Calu3 (cell line): ENCODE measurements at regions of chr11 and their contacts with region 1.

Region 1: GRCh38 chr11:5891216-5891800 is 1.7 kb upstream of the OR52E5 start:
- DNase-seq: no peak
- H3K4me3 Mint-ChIP-seq: no peak overlapping the region
- H3K27ac Mint-ChIP-seq: no peak overlapping the region
- H3K4me1 Mint-ChIP-seq: no peaks in the 10 kb centered on the region
- H3K27me3 Mint-ChIP-seq: peaks cover 31% of the 10 kb centered on the region
- CTCF ChIP-seq: no peak

Region 2: GRCh38 chr11:5123802-5124521 is 767.3 kb before region 1 on chr11:
- CTCF ChIA-PET with region 1: no interaction called
- intact Hi-C with region 1: loop called (anchors 5 kb)
- DNase-seq: peak; percentile 68
- H3K4me3 Mint-ChIP-seq: no peak overlapping the region
- H3K27ac Mint-ChIP-seq: no peak overlapping the region
- H3K4me1 Mint-ChIP-seq: no peaks in the 10 kb centered on the region
- H3K27me3 Mint-ChIP-seq: peaks cover 23% of the 10 kb centered on the region
- CTCF ChIP-seq: peak; percentile 54

Region 3: GRCh38 chr11:5204787-5205186 is 686.5 kb before region 1 on chr11:
- CTCF ChIA-PET with region 1: no interaction called
- intact Hi-C with region 1: loop called (anchors 10 kb)
- DNase-seq: peak; percentile 22
- H3K4me3 Mint-ChIP-seq: no peak overlapping the region
- H3K27ac Mint-ChIP-seq: no peak overlapping the region
- H3K4me1 Mint-ChIP-seq: no peaks in the 10 kb centered on the region
- H3K27me3 Mint-ChIP-seq: no peaks in the 10 kb centered on the region
- CTCF ChIP-seq: peak; percentile 53

Region 4: DNA sequence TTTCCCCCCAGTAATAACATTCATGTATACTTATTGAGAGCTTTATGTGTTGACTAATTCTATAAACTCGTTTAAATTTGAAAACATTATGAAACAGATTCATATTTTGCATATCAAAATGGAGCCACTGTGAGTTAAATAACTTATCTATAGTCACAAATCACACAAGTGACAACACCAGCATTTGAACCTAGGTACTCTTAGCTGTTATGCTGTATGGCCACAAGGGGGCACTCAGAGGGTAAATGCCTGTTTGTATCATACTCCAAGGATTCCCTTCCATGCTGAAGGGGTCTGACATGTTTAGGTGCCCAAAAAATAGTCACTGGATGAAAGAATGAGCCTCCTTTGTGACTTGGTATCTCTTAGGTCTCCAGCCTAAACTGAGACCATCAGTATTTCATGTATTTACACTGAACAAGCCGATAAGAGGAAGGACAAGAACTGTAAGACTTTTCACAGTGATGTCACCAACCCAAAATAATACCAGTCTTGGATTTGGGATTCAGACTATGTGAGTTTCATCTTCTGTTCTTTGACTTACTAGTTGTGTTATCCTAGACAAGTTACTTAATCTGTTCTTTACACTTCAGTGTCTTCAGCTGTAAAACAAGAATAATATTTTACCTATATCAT is 415.0 kb before region 1 on chr11:
- CTCF ChIA-PET with region 1: no interaction called
- intact Hi-C with region 1: loop called (anchors 10 kb)
- DNase-seq: peak; percentile 54
- H3K4me3 Mint-ChIP-seq: no peak overlapping the region
- H3K27ac Mint-ChIP-seq: no peak overlapping the region
- H3K4me1 Mint-ChIP-seq: no peaks in the 10 kb centered on the region
- H3K27me3 Mint-ChIP-seq: peaks cover 21% of the 10 kb centered on the region
- CTCF ChIP-seq: peak; percentile 41

Region 5: DNA sequence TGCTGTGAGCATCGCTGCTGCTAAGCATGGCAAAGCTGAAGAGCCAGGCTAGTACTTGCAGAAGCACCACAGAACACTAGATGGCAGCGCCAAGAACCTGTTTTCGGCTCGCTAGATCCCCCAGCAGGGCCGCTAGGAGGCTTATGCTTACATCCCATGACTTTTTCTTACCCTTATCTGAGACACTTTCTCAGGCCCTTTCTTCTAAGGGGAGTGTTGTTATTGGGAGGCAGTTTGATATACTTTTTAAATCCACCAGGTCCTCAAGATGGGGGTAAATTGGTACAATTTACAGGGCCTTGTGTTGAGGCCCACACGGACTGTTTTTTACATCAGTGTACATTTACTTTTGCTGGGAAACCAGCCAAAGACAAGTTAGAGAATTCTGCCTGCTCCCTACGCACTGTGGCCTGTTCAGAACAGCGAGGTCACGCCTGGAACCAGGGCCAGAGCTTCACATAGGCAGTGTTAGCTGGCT is 290.9 kb before region 1 on chr11:
- CTCF ChIA-PET with region 1: no interaction called
- intact Hi-C with region 1: loop called (anchors 5 kb)
- DNase-seq: peak; percentile 72
- H3K4me3 Mint-ChIP-seq: no peak overlapping the region
- H3K27ac Mint-ChIP-seq: no peak overlapping the region
- H3K4me1 Mint-ChIP-seq: peaks cover 27% of the 10 kb centered on the region
- H3K27me3 Mint-ChIP-seq: no peaks in the 10 kb centered on the region
- CTCF ChIP-seq: peak; percentile 81